Heart right ventricle (tissue), 16 donors: ENCODE measurements at regions of chr11 and their contacts with region 1.

Region 1: GRCh38 chr11:91041626-91042025 is 818.8 kb upstream of the CHORDC1 start:
- DNase-seq: no peak
- ATAC-seq: no peak
- H3K4me3 ChIP-seq: no peak overlapping the region
- H3K27ac ChIP-seq: no peak overlapping the region
- H3K4me1 ChIP-seq: no peaks in the 10 kb centered on the region
- H3K27me3 ChIP-seq: no peaks in the 10 kb centered on the region
- CTCF ChIP-seq: peak in 5 of 9 donors; percentile 10 to 32 (median 29)

Region 2: DNA sequence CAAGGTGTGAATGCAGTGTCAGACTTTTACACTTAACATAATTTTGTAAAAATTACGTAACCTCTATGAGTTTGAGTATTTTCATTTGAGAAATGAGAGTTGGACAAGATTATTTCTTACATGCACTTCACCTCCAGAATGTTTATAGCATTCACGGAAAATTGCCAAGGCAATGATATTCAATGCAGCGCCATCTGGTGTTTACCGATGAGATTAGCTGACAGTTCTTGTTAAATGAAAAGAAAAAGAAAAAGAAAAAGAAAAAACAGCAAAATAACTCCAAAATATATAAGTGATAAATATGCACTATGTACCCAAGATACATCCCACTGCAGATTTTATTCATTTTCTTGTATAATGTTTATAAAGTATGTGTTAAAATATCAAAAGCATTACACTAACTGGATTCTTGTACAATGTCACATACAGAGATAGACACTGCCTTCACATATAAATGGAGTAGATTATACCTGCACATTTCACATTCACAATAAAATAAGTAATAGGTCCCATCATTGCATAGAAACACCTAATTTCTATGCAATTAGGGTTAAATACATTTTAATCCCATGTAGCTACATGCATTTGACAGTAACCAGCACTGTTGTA is 206.7 kb after region 1 on chr11:
- intact Hi-C with region 1: loop called in 3 of 10 experiments (anchors 5 to 10 kb)
- DNase-seq: peak in 1 of 2 donors; percentile 9
- ATAC-seq: no peak
- H3K4me3 ChIP-seq: no peak overlapping the region
- H3K27ac ChIP-seq: no peak overlapping the region
- H3K4me1 ChIP-seq: no peaks in the 10 kb centered on the region
- H3K27me3 ChIP-seq: no peaks in the 10 kb centered on the region
- CTCF ChIP-seq: peak; percentile 17 to 78 (median 67)